H1 (cell line): ENCODE measurements at regions of chr2 and their contacts with region 1.

Region 1: DNA sequence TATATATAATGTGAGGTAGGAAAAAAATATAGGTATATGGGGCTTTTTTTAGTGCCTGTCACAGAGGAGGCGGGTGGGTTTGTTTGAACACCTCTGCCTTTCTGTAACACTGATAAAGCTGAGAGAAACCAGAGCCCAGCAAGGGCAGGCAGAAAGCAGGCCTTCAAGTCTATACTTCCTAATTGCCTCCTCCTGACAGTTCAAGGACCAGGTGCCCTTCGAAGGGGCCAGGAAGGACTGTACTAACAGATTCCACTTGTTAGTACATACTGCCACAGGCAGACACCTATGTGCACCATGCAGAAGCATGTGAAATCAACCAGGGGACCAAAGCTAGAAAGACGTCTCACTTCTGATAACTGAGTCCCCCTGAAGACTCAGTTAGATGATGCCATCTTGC is 13.8 kb downstream of the SLC1A4 start:
- DNase-seq: no peak
- H3K4me3 ChIP-seq: no peak overlapping the region
- H3K27ac ChIP-seq: no peak overlapping the region
- H3K4me1 ChIP-seq: peaks cover 0 to 5% (median 0%) of the 10 kb centered on the region in 4 experiments; a peak in 1 of 7 replicates
- H3K27me3 ChIP-seq: no peaks in the 10 kb centered on the region
- CTCF ChIP-seq: no peak
- EP300 ChIP-seq: no peak
- POLR2A ChIP-seq: no peak
- RAD21 ChIP-seq: no peak

Region 2: DNA sequence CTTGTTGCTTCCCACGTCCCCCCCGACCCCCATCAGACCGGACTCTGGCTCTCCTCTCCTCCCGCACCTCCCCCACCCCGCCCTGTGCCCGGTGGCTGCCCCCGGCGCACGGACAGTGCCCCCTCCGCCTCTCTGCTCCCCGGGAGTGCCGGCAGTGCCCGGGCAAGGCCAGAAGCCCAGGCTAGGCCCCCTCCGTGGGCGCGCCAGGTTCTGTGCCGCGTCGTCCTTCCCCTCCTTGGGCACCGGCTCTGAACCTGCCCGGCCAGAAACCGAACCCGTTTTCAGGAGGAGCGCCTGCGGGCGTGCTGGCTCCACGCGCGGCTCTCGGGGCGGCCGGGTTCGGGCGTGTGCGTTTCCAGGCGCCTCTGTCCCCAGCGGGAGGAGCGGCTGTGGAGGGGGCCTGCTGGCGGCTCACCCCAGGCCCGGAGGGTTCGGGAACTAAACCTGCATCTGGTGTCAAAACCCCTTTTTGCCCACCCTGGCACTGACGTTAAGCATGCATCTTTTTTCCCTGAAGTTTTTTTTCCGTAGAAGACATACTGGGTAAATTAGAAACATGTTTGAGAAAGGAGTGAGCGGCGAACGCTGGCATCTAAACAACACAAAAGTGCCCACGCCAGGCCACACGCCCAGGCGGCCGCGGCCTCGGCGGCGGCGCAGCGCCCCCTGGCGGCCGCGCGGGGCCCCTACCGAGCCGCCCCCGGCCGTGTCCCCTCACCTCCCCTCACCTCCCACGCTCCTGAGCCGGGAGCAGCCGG is 137.8 kb before region 1 on chr2:
- CTCF ChIA-PET with region 1: no interaction called
- POLR2A ChIA-PET with region 1: no interaction called
- DNase-seq: peak in 1 of 2 experiments; percentile 78
- H3K4me3 ChIP-seq: peak overlapping the region; percentile 39 to 80 (median 54)
- H3K27ac ChIP-seq: no peak overlapping the region
- H3K4me1 ChIP-seq: peaks cover 0 to 7% (median 6%) of the 10 kb centered on the region in 4 experiments
- H3K27me3 ChIP-seq: peaks cover 3 to 37% (median 32%) of the 10 kb centered on the region in 4 experiments
- CTCF ChIP-seq: peak; percentile 67 to 76 (median 68)
- EP300 ChIP-seq: no peak
- POLR2A ChIP-seq: no peak
- RAD21 ChIP-seq: peak; percentile 45 to 81; a peak in 3 of 4 replicates

Region 3: GRCh38 chr2:65017335-65017734 is 14.3 kb after region 1 on chr2:
- CTCF ChIA-PET with region 1: interaction called, 14 read pairs
- POLR2A ChIA-PET with region 1: no interaction called
- DNase-seq: no peak
- H3K4me3 ChIP-seq: no peak overlapping the region
- H3K27ac ChIP-seq: no peak overlapping the region
- H3K4me1 ChIP-seq: peaks cover 0 to 3% (median 2%) of the 10 kb centered on the region in 4 experiments; a peak in 4 of 7 replicates
- H3K27me3 ChIP-seq: no peaks in the 10 kb centered on the region
- CTCF ChIP-seq: peak; percentile 30 to 43 (median 40)
- EP300 ChIP-seq: no peak
- POLR2A ChIP-seq: no peak
- RAD21 ChIP-seq: peak; percentile 29 to 51; a peak in 3 of 4 replicates